ENCODE measurements at regions of chr1 and their contacts with region 1.

Region 1: DNA sequence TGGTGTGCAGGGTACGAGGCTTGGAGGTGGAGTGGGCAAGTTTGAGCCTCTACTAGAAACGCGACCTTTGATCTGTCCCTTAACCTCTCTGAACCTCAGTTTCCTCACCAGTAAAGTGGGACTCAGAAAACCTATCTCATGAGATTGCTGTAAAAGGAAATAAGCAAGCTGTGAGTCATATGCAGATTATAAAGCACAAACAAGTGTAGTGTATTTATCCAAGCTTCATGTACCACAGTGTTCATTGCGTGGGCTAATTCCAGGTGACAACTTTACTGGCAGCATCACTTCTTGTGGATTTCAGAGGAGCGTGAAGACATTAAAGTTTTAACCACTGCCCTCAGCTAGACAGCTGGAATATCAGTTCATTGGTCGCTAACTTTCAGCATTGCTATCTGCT is 44.4 kb downstream of the ZNF697 start:
- DNase-seq: no peak
- H3K4me3 ChIP-seq: no peak overlapping the region
- H3K27me3 ChIP-seq: no peaks in the 10 kb centered on the region
- CTCF ChIP-seq: no peak

Region 2: GRCh38 chr1:119626841-119627240 is 23.1 kb after region 1 on chr1:
- CTCF ChIA-PET with region 1: no interaction called
- POLR2A ChIA-PET with region 1: no interaction called
- DNase-seq: no peak
- H3K4me3 ChIP-seq: no peak overlapping the region
- H3K27me3 ChIP-seq: no peaks in the 10 kb centered on the region
- CTCF ChIP-seq: no peak

Region 3: GRCh38 chr1:119711804-119712341 is 108.2 kb after region 1 on chr1 and contains the start of gene PHGDH:
- CTCF ChIA-PET with region 1: no interaction called
- POLR2A ChIA-PET with region 1: interaction called, 12 read pairs
- DNase-seq: peak; percentile 68
- H3K4me3 ChIP-seq: peak within 1 kb of the TSS; percentile 83
- H3K27me3 ChIP-seq: no peaks in the 10 kb centered on the region; the same call in 1 of the 2 replicates
- CTCF ChIP-seq: no peak
- polyA plus RNA-seq, gene PHGDH: 138 and 287 TPM in 2 replicates

Measured in BJ (cell line).